ENCODE measurements at regions of chr2 and their contacts with region 1.

Region 1: GRCh38 chr2:180063494-180064092 is 56.5 kb upstream of the CWC22 start:
- DNase-seq: no peak
- ATAC-seq: no peak
- H3K4me3 ChIP-seq: no peak overlapping the region
- H3K4me3 Mint-ChIP-seq: no peak overlapping the region
- H3K27ac ChIP-seq: no peak overlapping the region
- H3K27ac Mint-ChIP-seq: no peak overlapping the region
- H3K4me1 ChIP-seq: no peaks in the 10 kb centered on the region
- H3K4me1 Mint-ChIP-seq: no peaks in the 10 kb centered on the region
- H3K27me3 ChIP-seq: no peaks in the 10 kb centered on the region
- H3K27me3 Mint-ChIP-seq: peaks cover 0 to 1% of the 10 kb centered on the region in 2 donors

Region 2: DNA sequence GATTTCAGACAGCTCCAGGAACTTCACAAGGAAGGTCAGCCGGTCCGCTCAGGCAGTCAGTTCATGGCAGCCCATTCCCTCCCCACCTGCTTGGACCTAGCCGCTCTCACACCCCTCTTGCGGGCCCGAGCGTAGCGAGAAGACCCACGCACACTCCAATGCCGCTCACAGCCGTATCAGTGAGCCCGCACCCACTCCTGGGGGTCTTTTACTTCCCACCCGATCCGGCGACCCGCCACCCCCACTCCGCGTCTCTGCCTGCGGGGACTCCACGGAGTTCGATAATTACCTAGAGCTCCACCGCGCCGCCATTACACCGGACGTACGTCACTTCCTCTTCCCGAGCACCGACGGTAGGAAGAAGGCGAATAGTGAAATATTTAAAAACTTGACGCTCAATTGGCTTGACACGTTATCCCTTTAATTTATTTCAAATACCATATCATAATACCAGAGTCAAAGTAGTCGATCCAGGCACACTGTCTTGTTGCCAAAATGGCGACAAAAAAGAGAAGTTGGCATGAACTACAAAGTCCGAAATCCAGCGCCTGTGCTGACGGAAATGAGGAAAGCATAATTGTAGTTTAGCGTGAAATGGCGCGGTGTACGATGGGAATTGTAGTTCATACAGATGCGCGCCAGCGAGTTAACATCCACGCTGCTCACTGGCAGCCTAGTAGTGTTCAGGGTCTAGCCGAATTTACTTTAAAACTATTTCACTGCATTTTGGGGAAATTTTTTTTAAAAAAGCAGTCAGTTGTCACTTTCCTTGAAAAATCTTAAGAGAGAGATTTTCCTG is 56.6 kb before region 1 on chr2 and contains the start of gene CWC22:
- CTCF ChIA-PET with region 1: no interaction called
- POLR2A ChIA-PET with region 1: no interaction called
- DNase-seq: peak; percentile 60 to 96 (median 86)
- ATAC-seq: peak; percentile 95 to 97 (median 96)
- H3K4me3 ChIP-seq: peak within 1 kb of the TSS; percentile 80 to 87
- H3K4me3 Mint-ChIP-seq: peak within 1 kb of the TSS; percentile 92 to 97 (median 96)
- H3K27ac ChIP-seq: peak within 1 kb of the TSS; percentile 99
- H3K27ac Mint-ChIP-seq: peak within 1 kb of the TSS; percentile 98 to 99
- H3K4me1 ChIP-seq: peaks cover 7 to 10% of the 10 kb centered on the region in 2 experiments
- H3K4me1 Mint-ChIP-seq: peaks cover 39 to 47% (median 46%) of the 10 kb centered on the region in 3 donors
- H3K27me3 ChIP-seq: no peaks in the 10 kb centered on the region
- H3K27me3 Mint-ChIP-seq: no peaks in the 10 kb centered on the region
- total RNA-seq, gene CWC22: 16.1 to 24.1 (median 22.6) TPM

Region 3: DNA sequence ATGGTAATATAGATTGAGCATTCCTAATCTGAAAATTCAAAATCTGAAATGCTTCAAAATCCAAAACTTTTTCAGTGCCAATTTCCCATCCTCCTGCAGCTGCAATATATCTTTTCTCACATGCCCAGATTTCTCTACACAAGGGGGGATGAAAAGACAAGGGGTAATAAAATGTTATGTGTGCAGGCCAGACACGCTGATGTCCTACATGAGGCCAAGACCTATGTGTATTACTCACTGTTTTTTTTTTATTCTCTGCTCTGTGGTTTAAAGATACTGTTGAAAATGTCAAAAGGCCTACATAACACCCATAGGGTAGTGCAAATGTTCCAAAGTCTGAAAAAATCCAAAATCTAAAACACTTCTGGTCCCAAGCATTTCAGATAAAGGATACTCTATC is 15.3 kb before region 1 on chr2:
- CTCF ChIA-PET with region 1: no interaction called
- POLR2A ChIA-PET with region 1: no interaction called
- DNase-seq: no peak
- ATAC-seq: no peak
- H3K4me3 ChIP-seq: no peak overlapping the region
- H3K4me3 Mint-ChIP-seq: no peak overlapping the region
- H3K27ac ChIP-seq: no peak overlapping the region
- H3K27ac Mint-ChIP-seq: no peak overlapping the region
- H3K4me1 ChIP-seq: no peaks in the 10 kb centered on the region
- H3K4me1 Mint-ChIP-seq: no peaks in the 10 kb centered on the region
- H3K27me3 ChIP-seq: no peaks in the 10 kb centered on the region
- H3K27me3 Mint-ChIP-seq: peaks cover 16 to 34% of the 10 kb centered on the region in 2 donors

Region 4: DNA sequence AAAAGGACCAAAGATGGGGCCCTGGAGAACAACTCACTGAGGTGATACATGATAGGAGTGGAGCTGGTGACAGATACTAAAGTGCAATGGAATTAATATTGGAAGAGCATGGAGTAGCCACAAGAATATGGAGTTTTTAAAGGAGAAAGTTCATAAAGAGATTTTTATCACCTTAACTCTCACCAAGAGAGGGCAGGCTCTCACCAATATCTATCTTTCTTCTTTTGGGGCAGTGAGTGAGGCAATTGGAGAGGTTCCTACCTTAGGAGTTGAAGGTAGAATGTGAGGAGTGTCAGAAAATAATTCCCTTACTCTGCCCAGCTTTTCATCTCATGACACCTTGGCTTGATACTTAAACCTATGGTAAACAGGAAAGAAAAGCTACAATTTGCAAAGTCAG is 177.2 kb after region 1 on chr2:
- CTCF ChIA-PET with region 1: no interaction called
- POLR2A ChIA-PET with region 1: no interaction called
- DNase-seq: peak in 1 of 35 experiments; percentile 1
- ATAC-seq: no peak
- H3K4me3 ChIP-seq: no peak overlapping the region
- H3K4me3 Mint-ChIP-seq: no peak overlapping the region
- H3K27ac ChIP-seq: no peak overlapping the region
- H3K27ac Mint-ChIP-seq: no peak overlapping the region
- H3K4me1 ChIP-seq: no peaks in the 10 kb centered on the region
- H3K4me1 Mint-ChIP-seq: no peaks in the 10 kb centered on the region
- H3K27me3 ChIP-seq: no peaks in the 10 kb centered on the region
- H3K27me3 Mint-ChIP-seq: peaks cover 1 to 3% of the 10 kb centered on the region in 2 donors

Region 5: GRCh38 chr2:180539541-180539940 is 475.9 kb after region 1 on chr2:
- CTCF ChIA-PET with region 1: no interaction called
- POLR2A ChIA-PET with region 1: no interaction called
- DNase-seq: no peak
- ATAC-seq: no peak
- H3K4me3 ChIP-seq: no peak overlapping the region
- H3K4me3 Mint-ChIP-seq: no peak overlapping the region
- H3K27ac ChIP-seq: no peak overlapping the region
- H3K27ac Mint-ChIP-seq: no peak overlapping the region
- H3K4me1 ChIP-seq: no peaks in the 10 kb centered on the region
- H3K4me1 Mint-ChIP-seq: no peaks in the 10 kb centered on the region
- H3K27me3 ChIP-seq: no peaks in the 10 kb centered on the region
- H3K27me3 Mint-ChIP-seq: peaks cover 0 to 3% of the 10 kb centered on the region in 2 donors

Region 6: GRCh38 chr2:180679693-180680092 is 616.1 kb after region 1 on chr2:
- CTCF ChIA-PET with region 1: interaction called in 1 of 2 experiments, 13 read pairs
- POLR2A ChIA-PET with region 1: no interaction called
- DNase-seq: no peak
- ATAC-seq: no peak
- H3K4me3 ChIP-seq: no peak overlapping the region
- H3K4me3 Mint-ChIP-seq: no peak overlapping the region
- H3K27ac ChIP-seq: no peak overlapping the region
- H3K27ac Mint-ChIP-seq: no peak overlapping the region
- H3K4me1 ChIP-seq: no peaks in the 10 kb centered on the region
- H3K4me1 Mint-ChIP-seq: no peaks in the 10 kb centered on the region
- H3K27me3 ChIP-seq: peaks cover 0 to 3% of the 10 kb centered on the region in 2 experiments
- H3K27me3 Mint-ChIP-seq: peaks cover 11 to 22% of the 10 kb centered on the region in 2 donors

Measured in T-cell (primary cell).